ENCODE measurements at regions of chr16 and their contacts with region 1.

Region 1: DNA sequence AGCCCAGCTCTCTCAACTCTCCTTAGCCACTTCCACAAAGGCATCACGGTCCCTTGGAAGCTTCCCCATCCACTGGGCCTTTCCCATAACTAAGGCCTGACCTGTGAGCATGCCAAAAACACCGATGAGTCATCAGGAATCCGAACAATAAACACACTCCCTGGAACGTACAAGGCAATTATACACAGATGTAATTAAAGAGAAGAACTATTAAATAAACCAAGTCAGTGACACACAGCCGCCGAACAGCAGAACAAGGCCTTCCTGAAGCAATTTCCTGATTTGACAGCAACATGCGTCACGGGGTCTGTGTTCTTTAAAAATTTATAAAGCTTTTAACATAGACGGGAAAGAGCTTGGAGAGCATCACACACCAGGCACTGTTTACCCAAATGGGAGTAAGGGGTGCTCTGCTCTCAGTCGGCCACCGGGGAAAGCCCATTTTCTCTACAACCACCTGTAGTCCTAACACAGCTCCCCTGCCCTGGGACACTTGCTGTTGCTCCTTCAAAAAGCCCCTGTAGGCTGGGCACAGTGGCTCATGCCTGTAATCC is 29.4 kb downstream of the COG7 start:
- DNase-seq: peak; percentile 79 to 92 (median 87)
- H3K4me3 ChIP-seq: no peak overlapping the region
- H3K27ac ChIP-seq: peak overlapping the region; percentile 72 to 93
- H3K4me1 ChIP-seq: peaks cover 11% of the 10 kb centered on the region
- H3K27me3 ChIP-seq: no peaks in the 10 kb centered on the region
- CTCF ChIP-seq: peak in 1 of 3 donors; percentile 11
- EP300 ChIP-seq: peak; percentile 10
- POLR2A ChIP-seq: no peak

Region 2: GRCh38 chr16:23408823-23409298 is 14.7 kb before region 1 on chr16:
- intact Hi-C with region 1: no loop called
- DNase-seq: no peak
- H3K4me3 ChIP-seq: no peak overlapping the region
- H3K27ac ChIP-seq: no peak overlapping the region
- H3K4me1 ChIP-seq: no peaks in the 10 kb centered on the region
- H3K27me3 ChIP-seq: no peaks in the 10 kb centered on the region
- CTCF ChIP-seq: no peak
- EP300 ChIP-seq: no peak
- POLR2A ChIP-seq: no peak

Region 3: GRCh38 chr16:23496826-23497542 is 73.4 kb after region 1 on chr16:
- intact Hi-C with region 1: loop called in 1 of 4 experiments (anchors 10 kb)
- DNase-seq: peak in 4 of 5 donors; percentile 47 to 56 (median 50)
- H3K4me3 ChIP-seq: no peak overlapping the region
- H3K27ac ChIP-seq: peak overlapping the region; percentile 45 to 56
- H3K4me1 ChIP-seq: peaks cover 34% of the 10 kb centered on the region
- H3K27me3 ChIP-seq: no peaks in the 10 kb centered on the region
- CTCF ChIP-seq: no peak
- EP300 ChIP-seq: no peak
- POLR2A ChIP-seq: no peak

Region 4: GRCh38 chr16:23518435-23518891 is 94.9 kb after region 1 on chr16:
- intact Hi-C with region 1: no loop called
- DNase-seq: no peak
- H3K4me3 ChIP-seq: no peak overlapping the region
- H3K27ac ChIP-seq: no peak overlapping the region
- H3K4me1 ChIP-seq: no peaks in the 10 kb centered on the region
- H3K27me3 ChIP-seq: no peaks in the 10 kb centered on the region
- CTCF ChIP-seq: no peak
- EP300 ChIP-seq: no peak
- POLR2A ChIP-seq: no peak

Region 5: DNA sequence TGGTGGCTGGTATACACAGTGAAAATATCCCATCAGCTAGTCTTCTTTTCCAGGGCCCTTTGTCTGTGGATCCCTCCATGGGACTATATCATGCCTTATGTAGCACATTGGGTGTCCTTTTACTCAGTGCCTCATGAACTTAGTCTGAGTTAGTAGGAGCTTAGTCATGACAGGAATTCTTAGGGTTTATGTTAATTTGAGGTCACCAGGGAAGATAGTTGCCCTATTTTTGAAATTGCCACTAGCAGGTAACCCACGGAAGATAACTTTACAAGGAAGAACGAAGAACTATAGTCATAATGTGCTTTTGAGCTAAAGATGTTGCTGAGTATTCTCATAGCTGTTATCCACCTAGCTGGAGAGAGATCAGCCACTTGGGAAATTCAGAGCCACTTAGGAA is 240.3 kb after region 1 on chr16:
- intact Hi-C with region 1: no loop called
- DNase-seq: no peak
- H3K4me3 ChIP-seq: no peak overlapping the region
- H3K27ac ChIP-seq: no peak overlapping the region
- H3K4me1 ChIP-seq: no peaks in the 10 kb centered on the region
- H3K27me3 ChIP-seq: no peaks in the 10 kb centered on the region
- CTCF ChIP-seq: no peak
- EP300 ChIP-seq: no peak
- POLR2A ChIP-seq: no peak

Measured in ovary (tissue), 10 donors.